SK-N-SH (cell line): ENCODE measurements at regions of chr1 and their contacts with region 1.

Region 1: GRCh38 chr1:11707621-11708276 is 16.2 kb downstream of the DRAXIN start:
- DNase-seq: peak; percentile 74
- H3K4me3 ChIP-seq: no peak overlapping the region
- H3K27ac ChIP-seq: no peak overlapping the region
- H3K4me1 ChIP-seq: peaks cover 0 to 8% of the 10 kb centered on the region in 2 experiments; a peak in 1 of 4 replicates
- H3K27me3 ChIP-seq: no peaks in the 10 kb centered on the region
- CTCF ChIP-seq: no peak
- EP300 ChIP-seq: no peak
- RAD21 ChIP-seq: no peak

Region 2: GRCh38 chr1:11576109-11576875 is 131.5 kb before region 1 on chr1:
- CTCF ChIA-PET with region 1: no interaction called
- POLR2A ChIA-PET with region 1: no interaction called
- DNase-seq: peak; percentile 58
- H3K4me3 ChIP-seq: no peak overlapping the region
- H3K27ac ChIP-seq: peak overlapping the region in 1 of 2 experiments; percentile 79; a peak in 2 of 4 replicates
- H3K4me1 ChIP-seq: peaks cover 0 to 12% of the 10 kb centered on the region in 2 experiments; a peak in 1 of 4 replicates
- H3K27me3 ChIP-seq: peaks cover 7% of the 10 kb centered on the region; the same call in 1 of the 2 replicates
- CTCF ChIP-seq: no peak
- EP300 ChIP-seq: peak in 1 of 2 experiments; percentile 52; a peak in 1 of 4 replicates
- RAD21 ChIP-seq: no peak

Region 3: GRCh38 chr1:11681071-11681771 is 26.5 kb before region 1 on chr1 and contains the start of gene MAD2L2:
- CTCF ChIA-PET with region 1: interaction called, 14 read pairs
- POLR2A ChIA-PET with region 1: interaction called, 3 read pairs
- DNase-seq: peak; percentile 97
- H3K4me3 ChIP-seq: peak within 1 kb of the TSS; percentile 90 to 96
- H3K27ac ChIP-seq: peak within 1 kb of the TSS; percentile 58 to 67
- H3K4me1 ChIP-seq: peaks cover 10 to 16% of the 10 kb centered on the region in 2 experiments; a peak in 2 of 4 replicates
- H3K27me3 ChIP-seq: no peaks in the 10 kb centered on the region
- CTCF ChIP-seq: no peak
- EP300 ChIP-seq: no peak
- RAD21 ChIP-seq: no peak
- polyA plus RNA-seq, gene MAD2L2: 70.0 and 94.0 TPM in 2 replicates

Region 4: GRCh38 chr1:11693024-11693590 is 14.6 kb before region 1 on chr1:
- CTCF ChIA-PET with region 1: interaction called, 16 read pairs
- POLR2A ChIA-PET with region 1: interaction called, 3 read pairs
- DNase-seq: no peak
- H3K4me3 ChIP-seq: no peak overlapping the region
- H3K27ac ChIP-seq: peak overlapping the region in 1 of 2 experiments; percentile 13; a peak in 1 of 4 replicates
- H3K4me1 ChIP-seq: peaks cover 6 to 15% of the 10 kb centered on the region in 2 experiments; a peak in 3 of 4 replicates
- H3K27me3 ChIP-seq: peaks cover 14% of the 10 kb centered on the region
- CTCF ChIP-seq: no peak
- EP300 ChIP-seq: no peak
- RAD21 ChIP-seq: no peak

Region 5: GRCh38 chr1:11813021-11813420 is 105.3 kb after region 1 on chr1:
- CTCF ChIA-PET with region 1: no interaction called
- POLR2A ChIA-PET with region 1: no interaction called
- DNase-seq: no peak
- H3K4me3 ChIP-seq: no peak overlapping the region
- H3K27ac ChIP-seq: no peak overlapping the region
- H3K4me1 ChIP-seq: peaks cover 0 to under 1% of the 10 kb centered on the region in 2 experiments; a peak in 1 of 4 replicates
- H3K27me3 ChIP-seq: no peaks in the 10 kb centered on the region
- CTCF ChIP-seq: no peak
- EP300 ChIP-seq: no peak
- RAD21 ChIP-seq: no peak

Region 6: GRCh38 chr1:12078938-12079861 is 371.5 kb after region 1 on chr1:
- CTCF ChIA-PET with region 1: no interaction called
- POLR2A ChIA-PET with region 1: no interaction called
- DNase-seq: peak; percentile 74
- H3K4me3 ChIP-seq: no peak overlapping the region
- H3K27ac ChIP-seq: no peak overlapping the region
- H3K4me1 ChIP-seq: no peaks in the 10 kb centered on the region
- H3K27me3 ChIP-seq: no peaks in the 10 kb centered on the region
- CTCF ChIP-seq: peak; percentile 60
- EP300 ChIP-seq: no peak
- RAD21 ChIP-seq: peak; percentile 59